ENCODE measurements at regions of chr3 and their contacts with region 1.

Region 1: GRCh38 chr3:84965141-84965540 is 6.4 kb downstream of the CADM2 start:
- DNase-seq: peak; percentile 47
- ATAC-seq: peak; percentile 94
- H3K4me3 ChIP-seq: no peak overlapping the region
- H3K27ac ChIP-seq: no peak overlapping the region
- H3K4me1 ChIP-seq: 0 out of 2 replicates have a peak, but pooled peaks cover under 1% of the 10 kb centered on the region
- H3K27me3 ChIP-seq: peaks cover 16% of the 10 kb centered on the region
- CTCF ChIP-seq: peak; percentile 60

Region 2: GRCh38 chr3:84567796-84568195 is 397.3 kb before region 1 on chr3:
- CTCF ChIA-PET with region 1: no interaction called
- POLR2A ChIA-PET with region 1: no interaction called
- intact Hi-C with region 1: loop called (anchors 5 kb)
- DNase-seq: no peak
- ATAC-seq: no peak
- H3K4me3 ChIP-seq: no peak overlapping the region
- H3K27ac ChIP-seq: no peak overlapping the region
- H3K4me1 ChIP-seq: no peaks in the 10 kb centered on the region
- H3K27me3 ChIP-seq: no peaks in the 10 kb centered on the region
- CTCF ChIP-seq: no peak

Region 3: DNA sequence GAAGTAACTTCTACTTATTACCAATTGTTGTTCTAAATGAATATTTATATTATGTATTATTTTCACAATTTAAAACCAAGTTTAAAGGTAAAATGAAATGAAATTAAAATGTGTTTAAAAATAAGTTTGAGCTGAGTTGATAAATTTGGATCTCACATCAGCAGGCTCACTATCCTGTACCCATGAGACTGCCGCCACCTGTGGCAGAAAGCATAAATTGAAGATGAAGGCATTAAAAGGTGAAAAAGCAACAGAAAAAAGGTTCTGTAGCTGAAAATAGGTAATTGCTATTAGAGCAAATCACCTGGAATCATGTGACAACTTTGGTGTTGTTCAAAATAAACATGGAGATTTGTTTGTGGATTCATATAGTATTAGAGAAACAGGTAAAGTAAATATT is 139.3 kb before region 1 on chr3:
- CTCF ChIA-PET with region 1: no interaction called
- POLR2A ChIA-PET with region 1: no interaction called
- intact Hi-C with region 1: loop called (anchors 5 kb)
- DNase-seq: peak; percentile 23
- ATAC-seq: 0 out of 2 replicates have a peak, but pooled peaks have one; percentile 42
- H3K4me3 ChIP-seq: no peak overlapping the region
- H3K27ac ChIP-seq: no peak overlapping the region
- H3K4me1 ChIP-seq: peaks cover 13% of the 10 kb centered on the region
- H3K27me3 ChIP-seq: no peaks in the 10 kb centered on the region
- CTCF ChIP-seq: peak; percentile 51

Region 4: DNA sequence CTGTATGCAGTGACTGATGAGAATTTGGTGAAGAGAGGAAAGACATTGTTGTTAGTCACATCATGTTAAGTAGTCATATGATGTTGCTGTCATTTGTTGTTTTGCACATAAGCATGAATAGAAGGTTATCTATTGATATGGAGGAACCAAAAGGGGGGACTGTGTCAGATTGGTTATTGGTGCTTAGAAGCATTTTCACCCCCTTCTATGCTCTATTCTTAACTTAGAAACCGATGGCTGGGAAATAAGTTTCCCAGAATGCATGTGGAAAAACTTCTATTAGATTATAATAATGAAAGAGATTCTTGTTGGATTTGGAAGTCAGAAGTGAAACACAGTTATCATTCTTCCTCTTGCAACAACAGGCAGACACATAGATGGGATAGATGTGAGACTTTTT is 39.6 kb before region 1 on chr3:
- CTCF ChIA-PET with region 1: no interaction called
- POLR2A ChIA-PET with region 1: no interaction called
- intact Hi-C with region 1: no loop called
- DNase-seq: no peak
- ATAC-seq: no peak
- H3K4me3 ChIP-seq: no peak overlapping the region
- H3K27ac ChIP-seq: no peak overlapping the region
- H3K4me1 ChIP-seq: no peaks in the 10 kb centered on the region
- H3K27me3 ChIP-seq: no peaks in the 10 kb centered on the region
- CTCF ChIP-seq: no peak